ENCODE measurements at regions of chr9 and their contacts with region 1.

Region 1: DNA sequence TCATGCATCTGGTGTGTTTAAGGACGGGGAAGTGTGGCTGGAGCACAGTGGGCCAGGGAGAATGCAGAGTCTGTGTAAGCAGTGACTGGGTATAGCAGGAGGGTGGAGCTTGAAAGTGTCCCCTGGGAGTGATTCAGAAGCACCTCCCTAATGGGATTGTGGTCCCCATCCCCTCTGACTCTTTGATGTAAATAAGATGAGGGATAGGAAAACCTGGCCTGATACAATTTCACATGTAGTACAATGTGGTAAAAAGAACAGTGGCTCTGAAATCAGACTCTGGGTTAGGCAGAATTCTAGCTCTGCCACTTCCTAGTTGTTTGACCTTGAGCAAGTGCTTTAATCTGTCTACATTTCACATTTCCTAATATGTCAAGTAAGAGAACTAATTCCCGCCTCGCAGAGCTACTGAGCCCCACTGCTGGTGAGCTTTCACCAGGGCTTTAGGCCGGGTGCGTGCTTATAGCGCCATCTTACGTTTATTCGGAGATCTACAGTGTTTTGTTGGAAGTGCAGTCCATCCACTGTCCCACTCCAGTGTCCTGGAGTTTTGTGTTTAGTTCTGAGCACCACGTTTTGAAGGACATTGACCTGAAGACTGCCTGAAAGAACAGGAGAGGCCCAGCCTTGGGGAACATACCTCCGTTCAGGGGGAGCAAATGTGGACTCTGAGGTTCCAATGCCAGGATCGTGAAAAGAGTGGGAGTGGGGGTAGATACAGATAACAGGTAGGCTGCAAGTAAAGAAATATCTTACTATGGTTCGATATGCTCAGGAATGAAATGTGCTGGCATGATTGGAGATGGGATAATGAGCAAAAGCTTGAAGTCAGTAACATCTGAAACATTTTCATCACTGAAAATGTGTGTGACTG is 51.2 kb upstream of the TESK1 start:
- DNase-seq: peak; percentile 62 to 70 (median 64)
- ATAC-seq: peak; percentile 97
- H3K4me3 ChIP-seq: no peak overlapping the region
- H3K27ac ChIP-seq: no peak overlapping the region
- H3K4me1 ChIP-seq: peaks cover 0 to 3% of the 10 kb centered on the region in 2 experiments; a peak in 3 of 5 replicates
- H3K27me3 ChIP-seq: no peaks in the 10 kb centered on the region
- CTCF ChIP-seq: peak; percentile 82 to 91 (median 88)
- EP300 ChIP-seq: no peak
- POLR2A ChIP-seq: no peak
- RAD21 ChIP-seq: peak; percentile 86 to 90

Region 2: GRCh38 chr9:35277628-35278359 is 276.1 kb before region 1 on chr9:
- CTCF ChIA-PET with region 1: no interaction called
- POLR2A ChIA-PET with region 1: no interaction called
- in situ Hi-C with region 1: loop called (anchors 10 kb)
- intact Hi-C with region 1: no loop called
- DNase-seq: no peak
- ATAC-seq: no peak
- H3K4me3 ChIP-seq: no peak overlapping the region
- H3K27ac ChIP-seq: no peak overlapping the region
- H3K4me1 ChIP-seq: no peaks in the 10 kb centered on the region
- H3K27me3 ChIP-seq: no peaks in the 10 kb centered on the region
- CTCF ChIP-seq: no peak
- EP300 ChIP-seq: no peak
- POLR2A ChIP-seq: no peak
- RAD21 ChIP-seq: no peak

Region 3: DNA sequence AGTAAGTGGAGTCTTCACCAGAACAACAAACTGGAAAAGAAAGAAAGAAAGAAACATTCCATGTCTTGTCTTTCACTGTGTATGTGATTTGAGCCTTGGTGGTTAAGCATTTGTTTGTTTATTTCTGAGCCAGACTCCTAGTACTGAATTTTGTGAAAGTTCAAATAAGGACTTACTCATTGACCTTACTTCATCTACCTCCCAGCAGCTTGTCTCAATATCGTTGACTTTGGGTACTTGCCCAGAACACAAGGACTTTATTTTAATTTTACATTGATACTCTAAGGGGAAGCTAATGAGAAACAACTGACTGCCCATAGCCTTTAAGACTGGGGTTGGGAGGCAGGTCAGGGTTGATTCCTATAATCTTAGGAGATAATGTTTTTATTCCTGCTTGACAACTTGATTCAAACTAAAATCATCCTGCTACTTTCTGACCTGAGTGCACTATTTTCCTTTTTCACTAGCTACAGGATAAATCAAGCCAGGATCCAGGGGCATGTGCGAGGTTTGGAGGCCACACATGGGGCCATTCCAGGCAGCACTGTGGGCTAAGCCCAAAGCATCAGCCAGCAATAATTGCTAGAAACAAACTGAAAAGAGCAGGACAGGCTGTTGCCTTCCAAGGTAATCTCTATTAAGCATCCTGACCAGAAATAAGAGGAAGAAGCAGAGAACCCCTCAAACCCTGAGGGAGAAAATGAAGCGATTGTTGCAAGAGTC is 202.9 kb before region 1 on chr9:
- CTCF ChIA-PET with region 1: no interaction called
- POLR2A ChIA-PET with region 1: no interaction called
- in situ Hi-C with region 1: no loop called
- intact Hi-C with region 1: no loop called
- DNase-seq: no peak
- ATAC-seq: no peak
- H3K4me3 ChIP-seq: no peak overlapping the region
- H3K27ac ChIP-seq: no peak overlapping the region
- H3K4me1 ChIP-seq: no peaks in the 10 kb centered on the region; a peak in 1 of 5 replicates
- H3K27me3 ChIP-seq: no peaks in the 10 kb centered on the region
- CTCF ChIP-seq: no peak
- EP300 ChIP-seq: no peak
- POLR2A ChIP-seq: no peak
- RAD21 ChIP-seq: no peak

Region 4: DNA sequence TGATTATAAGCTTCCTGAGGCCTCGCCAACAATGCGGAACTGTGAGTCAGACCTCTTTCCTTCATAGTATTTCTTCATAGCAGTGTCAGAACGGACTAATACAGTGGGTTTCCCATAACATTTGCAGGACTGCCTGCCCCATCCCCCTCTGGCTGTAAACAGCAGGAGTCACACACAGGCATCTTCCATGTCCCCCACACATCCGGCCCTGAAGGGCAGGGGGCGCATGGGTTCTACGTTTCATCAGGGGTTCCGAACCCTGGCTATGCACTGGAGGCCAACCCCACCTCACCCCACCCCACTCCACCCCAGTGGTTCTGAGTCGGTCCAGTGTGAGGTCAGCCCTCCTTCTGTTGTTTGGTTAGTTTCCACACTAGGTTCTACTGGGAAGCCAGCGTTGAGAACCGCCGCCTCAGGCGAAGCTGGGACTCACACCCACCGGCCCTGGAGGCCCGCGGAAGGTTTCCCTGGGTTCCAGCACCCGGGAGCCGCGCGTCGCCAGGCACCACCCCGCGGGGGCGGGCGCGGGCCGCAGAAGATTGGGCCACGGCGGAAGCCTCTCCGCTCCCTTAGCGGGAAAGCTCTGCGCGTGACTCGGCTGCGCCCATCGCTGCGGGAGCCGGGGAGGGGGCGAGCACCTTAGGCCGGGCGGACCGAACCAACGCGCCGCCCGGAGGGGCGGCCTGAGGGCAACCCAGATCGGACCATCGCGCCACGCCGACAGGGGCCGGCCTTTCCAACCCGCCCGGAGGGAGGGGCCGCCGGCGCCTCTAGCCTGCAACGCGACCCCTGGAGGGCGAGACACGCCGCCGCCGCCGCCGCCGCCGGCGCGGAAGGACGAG is 64.4 kb before region 1 on chr9 and contains the start of gene RUSC2:
- CTCF ChIA-PET with region 1: interaction called, 5 read pairs
- POLR2A ChIA-PET with region 1: interaction called, 5 read pairs
- in situ Hi-C with region 1: loop called (anchors 5 kb)
- intact Hi-C with region 1: no loop called
- DNase-seq: peak; percentile 76 to 92 (median 80)
- ATAC-seq: peak; percentile 88
- H3K4me3 ChIP-seq: peak within 1 kb of the TSS; percentile 67
- H3K27ac ChIP-seq: peak within 1 kb of the TSS; percentile 93
- H3K4me1 ChIP-seq: peaks cover 11 to 16% of the 10 kb centered on the region in 2 experiments; a peak in 4 of 5 replicates
- H3K27me3 ChIP-seq: no peaks in the 10 kb centered on the region
- CTCF ChIP-seq: peak; percentile 33 to 42 (median 35); a peak in 5 of 6 replicates
- EP300 ChIP-seq: no peak
- POLR2A ChIP-seq: peak; percentile 66
- RAD21 ChIP-seq: peak in 1 of 2 experiments; percentile 63; a peak in 3 of 4 replicates
- polyA plus RNA-seq, gene RUSC2: 0.08 TPM

Region 5: DNA sequence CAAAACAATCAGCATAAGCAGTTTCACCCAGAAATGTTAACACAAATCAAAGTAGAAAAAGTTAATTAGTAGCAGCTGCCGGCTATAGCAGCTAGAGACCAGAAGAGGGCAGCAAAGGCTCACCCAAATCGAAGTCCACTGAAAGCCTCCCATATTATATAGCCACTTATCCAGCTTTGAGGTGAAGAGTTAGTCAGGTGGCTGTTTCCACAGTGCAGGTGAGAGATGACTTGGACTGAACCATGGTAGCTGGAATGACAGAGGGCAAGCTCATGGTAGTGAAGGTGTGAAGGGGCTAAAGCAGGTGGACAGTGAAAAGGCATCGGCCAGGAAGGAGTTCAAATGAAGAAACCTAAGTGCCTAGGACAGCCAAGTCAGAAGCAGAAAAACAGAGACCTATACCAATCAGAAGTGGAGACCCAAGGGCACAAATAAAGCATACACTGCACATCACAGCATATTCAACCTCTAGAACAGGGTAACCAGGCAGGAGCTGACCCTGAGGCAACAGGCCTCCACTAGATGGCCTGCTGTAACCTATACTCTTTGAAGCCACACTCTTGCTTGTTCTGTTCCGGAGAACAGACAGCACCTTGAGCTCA is 853.3 kb after region 1 on chr9:
- CTCF ChIA-PET with region 1: no interaction called
- POLR2A ChIA-PET with region 1: no interaction called
- in situ Hi-C with region 1: no loop called
- intact Hi-C with region 1: no loop called
- DNase-seq: peak; percentile 17 to 60 (median 32)
- ATAC-seq: peak; percentile 89
- H3K4me3 ChIP-seq: no peak overlapping the region
- H3K27ac ChIP-seq: no peak overlapping the region; the same call in 2 of the 3 replicates
- H3K4me1 ChIP-seq: no peaks in the 10 kb centered on the region
- H3K27me3 ChIP-seq: no peaks in the 10 kb centered on the region
- CTCF ChIP-seq: peak; percentile 71 to 87 (median 74)
- EP300 ChIP-seq: no peak
- POLR2A ChIP-seq: no peak
- RAD21 ChIP-seq: peak; percentile 73 to 78